Naive thymus-derived CD4-positive, alpha-beta T cell (primary cell): ENCODE measurements at regions of chr19 and their contacts with region 1.

Region 1: DNA sequence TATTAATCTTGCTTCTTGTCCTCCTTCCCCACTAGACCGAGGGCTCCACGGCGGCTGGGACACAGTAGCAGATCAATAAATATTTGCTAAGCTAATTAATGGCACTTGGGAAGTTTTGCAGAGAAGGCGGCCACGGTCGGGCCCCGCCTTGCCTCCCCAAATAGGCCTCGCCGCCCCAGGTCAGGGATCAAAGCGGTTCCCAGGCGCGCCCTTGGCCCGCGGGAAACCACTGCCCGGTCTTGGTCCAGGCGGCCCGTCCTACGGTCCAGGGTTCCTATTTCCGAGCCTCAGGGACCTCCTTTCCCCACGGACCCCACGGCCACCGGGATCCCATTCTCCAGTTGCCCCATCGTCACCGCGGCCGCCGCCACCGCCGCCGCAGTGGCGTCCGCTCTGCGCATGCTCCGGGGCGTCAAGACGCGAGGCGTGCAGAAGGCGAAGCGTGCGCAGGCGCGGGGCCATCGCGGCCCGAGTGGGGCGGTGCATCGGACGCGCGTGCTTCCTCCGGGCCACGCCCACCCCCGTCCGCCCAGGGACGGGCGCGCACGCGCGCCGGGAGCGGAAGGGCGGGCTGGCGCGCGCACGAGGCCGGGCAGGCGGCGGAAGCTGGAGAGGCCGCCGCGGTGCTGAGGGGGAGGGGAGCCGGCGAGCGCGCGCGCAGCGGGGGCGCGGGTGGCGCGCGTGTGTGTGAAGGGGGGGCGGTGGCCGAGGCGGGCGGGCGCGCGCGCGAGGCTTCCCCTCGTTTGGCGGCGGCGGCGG is at the start of gene SMARCA4:
- DNase-seq: peak; percentile 96 to 100 (median 99)
- ATAC-seq: peak; percentile 96
- H3K4me3 ChIP-seq: peak within 1 kb of the TSS; percentile 89
- H3K4me3 Mint-ChIP-seq: peak within 1 kb of the TSS; percentile 84 to 94 (median 90)
- H3K27ac ChIP-seq: peak within 1 kb of the TSS; percentile 89
- H3K27ac Mint-ChIP-seq: peak within 1 kb of the TSS; percentile 79 to 94 (median 93)
- H3K4me1 ChIP-seq: peaks cover 28 to 33% of the 10 kb centered on the region in 2 donors
- H3K4me1 Mint-ChIP-seq: peaks cover 22 to 42% (median 34%) of the 10 kb centered on the region in 7 donors
- H3K27me3 ChIP-seq: no peaks in the 10 kb centered on the region
- H3K27me3 Mint-ChIP-seq: no peaks in the 10 kb centered on the region
- total RNA-seq, gene SMARCA4: 96.0 to 126 (median 104) TPM

Region 2: DNA sequence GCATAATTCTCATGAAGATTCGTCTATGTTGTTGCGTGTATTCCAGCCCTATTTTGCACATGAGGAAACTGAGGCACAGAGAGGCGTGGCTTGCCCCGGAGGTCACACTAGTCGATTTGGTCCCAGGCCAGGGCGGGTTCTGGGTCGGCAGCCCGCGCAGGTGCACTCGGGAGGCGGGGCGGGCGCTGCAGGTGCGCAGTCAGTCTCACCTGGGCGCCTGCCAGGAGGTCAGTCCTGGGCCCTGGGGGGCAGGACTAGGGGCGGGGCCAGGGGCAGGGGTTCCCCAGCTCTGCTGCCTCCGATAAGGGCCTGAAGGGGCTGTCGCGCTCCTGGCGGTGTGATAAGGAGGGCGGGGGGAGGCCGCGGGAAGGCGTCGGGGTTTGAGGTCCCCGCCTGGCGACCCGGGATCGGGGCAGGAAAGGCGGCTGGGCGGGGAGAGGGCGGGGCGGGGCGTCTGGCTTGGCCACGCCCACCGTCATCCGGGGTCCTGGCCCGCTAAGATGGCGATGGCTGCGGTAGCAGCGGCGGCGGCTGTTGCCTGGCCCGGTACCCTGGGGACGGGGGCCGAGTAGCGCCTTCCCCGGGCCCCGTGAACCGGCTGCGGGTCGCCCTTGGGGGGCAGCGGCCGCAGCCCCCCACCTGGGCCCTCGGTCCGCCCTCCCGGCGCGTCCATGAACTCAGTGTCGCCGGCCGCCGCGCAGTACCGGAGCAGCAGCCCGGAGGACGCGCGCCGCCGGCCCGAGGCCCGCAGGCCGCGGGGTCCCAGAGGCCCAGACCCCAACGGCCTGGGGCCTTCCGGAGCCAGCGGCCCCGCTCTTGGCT is 416.9 kb before region 1 on chr19 and contains the start of gene ATG4D:
- CTCF ChIA-PET with region 1: no interaction called
- POLR2A ChIA-PET with region 1: no interaction called
- intact Hi-C with region 1: loop called in 1 of 2 experiments (anchors 5 kb)
- DNase-seq: peak; percentile 77 to 90 (median 84)
- ATAC-seq: peak; percentile 93
- H3K4me3 ChIP-seq: peak within 1 kb of the TSS; percentile 83
- H3K4me3 Mint-ChIP-seq: peak within 1 kb of the TSS; percentile 83 to 93 (median 88)
- H3K27ac ChIP-seq: peak within 1 kb of the TSS; percentile 96
- H3K27ac Mint-ChIP-seq: peak within 1 kb of the TSS; percentile 72 to 91 (median 87)
- H3K4me1 ChIP-seq: peaks cover 13 to 19% of the 10 kb centered on the region in 2 donors
- H3K4me1 Mint-ChIP-seq: peaks cover 8 to 27% (median 16%) of the 10 kb centered on the region in 7 donors
- H3K27me3 ChIP-seq: no peaks in the 10 kb centered on the region
- H3K27me3 Mint-ChIP-seq: peaks cover 4 to 28% (median 5%) of the 10 kb centered on the region in 5 donors
- total RNA-seq, gene ATG4D: 41.7 to 70.3 (median 56.7) TPM

Region 3: GRCh38 chr19:10928525-10929401 is 31.7 kb before region 1 on chr19 and contains the starts of genes TIMM29 and YIPF2:
- CTCF ChIA-PET with region 1: interaction called, 3 read pairs
- POLR2A ChIA-PET with region 1: interaction called, 9 read pairs
- intact Hi-C with region 1: loop called (anchors 1 to 2 kb)
- DNase-seq: peak; percentile 76 to 92 (median 88)
- ATAC-seq: peak; percentile 91
- H3K4me3 ChIP-seq: peak within 1 kb of the TSS; percentile 89
- H3K4me3 Mint-ChIP-seq: peak within 1 kb of the TSS; percentile 84 to 96 (median 92)
- H3K27ac ChIP-seq: peak within 1 kb of the TSS; percentile 77
- H3K27ac Mint-ChIP-seq: peak within 1 kb of the TSS; percentile 66 to 93 (median 90)
- H3K4me1 ChIP-seq: peaks cover 14 to 16% of the 10 kb centered on the region in 2 donors
- H3K4me1 Mint-ChIP-seq: peaks cover 12 to 33% (median 26%) of the 10 kb centered on the region in 7 donors
- H3K27me3 ChIP-seq: no peaks in the 10 kb centered on the region
- H3K27me3 Mint-ChIP-seq: no peaks in the 10 kb centered on the region
- total RNA-seq, gene TIMM29: 15.8 to 33.4 (median 24.7) TPM
- total RNA-seq, gene YIPF2: 20.5 to 27.9 (median 26.2) TPM

Region 4: GRCh38 chr19:11090054-11090900 is 129.8 kb after region 1 on chr19:
- CTCF ChIA-PET with region 1: no interaction called
- POLR2A ChIA-PET with region 1: interaction called, 3 read pairs
- intact Hi-C with region 1: loop called (anchors 2 kb)
- DNase-seq: peak; percentile 89 to 97 (median 96)
- ATAC-seq: peak; percentile 90
- H3K4me3 ChIP-seq: peak overlapping the region; percentile 83
- H3K4me3 Mint-ChIP-seq: peak overlapping the region; percentile 85 to 94 (median 89)
- H3K27ac ChIP-seq: peak overlapping the region; percentile 91
- H3K27ac Mint-ChIP-seq: peak overlapping the region; percentile 88 to 99 (median 96)
- H3K4me1 ChIP-seq: peaks cover 24 to 41% of the 10 kb centered on the region in 2 donors
- H3K4me1 Mint-ChIP-seq: peaks cover 13 to 51% (median 44%) of the 10 kb centered on the region in 7 donors
- H3K27me3 ChIP-seq: no peaks in the 10 kb centered on the region
- H3K27me3 Mint-ChIP-seq: peaks cover 0 to 2% (median 0%) of the 10 kb centered on the region in 5 donors